Right ventricle myocardium superior (tissue), 1 donor: ENCODE measurements at regions of chr15 and their contacts with region 1.

Region 1: GRCh38 chr15:50765195-50765973 is at the start of gene SPPL2A:
- DNase-seq: peak; percentile 91
- ATAC-seq: peak; percentile 91
- total RNA-seq, gene SPPL2A: 87.5 TPM

Region 2: DNA sequence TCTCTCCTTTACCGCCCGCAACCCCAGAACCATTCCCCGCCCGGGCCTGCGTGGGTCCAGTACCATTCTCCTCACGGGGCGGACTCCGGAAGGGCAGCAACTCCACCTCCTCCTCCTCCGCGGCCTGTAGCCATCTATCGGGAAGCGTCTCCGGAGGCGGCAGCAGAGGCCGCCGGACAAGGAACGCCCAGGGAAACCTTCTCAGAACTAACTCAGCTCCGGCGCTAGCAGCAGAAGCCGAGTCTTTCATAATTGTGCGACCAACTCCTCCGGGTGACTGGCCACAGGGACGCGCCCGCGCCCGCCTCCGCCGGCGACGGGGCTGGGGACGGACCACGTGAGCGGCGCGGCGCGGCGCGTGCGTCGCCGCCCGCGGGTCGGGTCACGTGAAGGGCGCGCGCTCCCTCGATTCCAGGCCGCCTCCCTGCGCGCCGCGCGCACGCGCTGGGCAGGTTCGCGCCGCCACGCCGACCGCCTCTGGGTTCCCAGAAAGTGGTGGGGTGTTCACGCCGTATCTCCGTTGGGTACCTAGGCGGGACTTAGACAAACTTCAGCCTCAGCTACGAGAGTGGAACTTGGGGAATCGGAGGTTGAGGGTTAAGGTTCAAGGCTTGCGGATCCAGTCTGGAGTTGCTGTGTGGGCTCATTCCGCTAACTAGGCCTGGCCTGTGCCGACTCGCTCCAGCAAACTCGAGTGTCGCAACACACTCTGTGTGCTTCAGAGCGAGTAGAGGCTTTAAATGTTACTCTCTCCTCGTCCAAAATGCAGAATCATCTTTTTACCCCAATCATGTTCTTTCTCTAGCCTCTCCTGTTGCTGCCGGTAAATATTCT is 78.7 kb before region 1 on chr15 and contains the start of gene TRPM7:
- intact Hi-C with region 1: loop called (anchors 5 kb)
- DNase-seq: peak; percentile 94
- ATAC-seq: peak; percentile 96
- total RNA-seq, gene TRPM7: 27.9 TPM

Region 3: DNA sequence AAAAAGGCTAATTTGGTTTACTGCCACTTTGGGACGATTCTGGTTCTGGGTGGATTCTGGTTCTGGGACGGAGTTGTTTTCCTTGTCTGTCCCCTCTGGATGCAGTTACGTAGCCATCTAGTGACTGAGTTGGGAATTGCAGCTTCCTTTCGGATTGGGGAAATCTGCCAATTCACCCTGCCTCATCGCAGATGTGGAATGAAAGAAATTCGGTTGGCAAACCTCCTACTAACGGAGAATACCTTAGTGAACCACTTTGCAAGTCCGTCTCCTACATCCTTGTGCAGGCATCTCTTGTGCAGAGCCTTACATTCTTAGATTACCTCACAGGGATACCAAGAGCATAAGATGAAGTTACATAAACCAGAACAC is 111.6 kb after region 1 on chr15:
- intact Hi-C with region 1: loop called (anchors 5 kb)
- DNase-seq: peak; percentile 51
- ATAC-seq: peak; percentile 85